Transverse colon (tissue), 4 donors: ENCODE measurements at regions of chr4 and their contacts with region 1.

Region 1: DNA sequence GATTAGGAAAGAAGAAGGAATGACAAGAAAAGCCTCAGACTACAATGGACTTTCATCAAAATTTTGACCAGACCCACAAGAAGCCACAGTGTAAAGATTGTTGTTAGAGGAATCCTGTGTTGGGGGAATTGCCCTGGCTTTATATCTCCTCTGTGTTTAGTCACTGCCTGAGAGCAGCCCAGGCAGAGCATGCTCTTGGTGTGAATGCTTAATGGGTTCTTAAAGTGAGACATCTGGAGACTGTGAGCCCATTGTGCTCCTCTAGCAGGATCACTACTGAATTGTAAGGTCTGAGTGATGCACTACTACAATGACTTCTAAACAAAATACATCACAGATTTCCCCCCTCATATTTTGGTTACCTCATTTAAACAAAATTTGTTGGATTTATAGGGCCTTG is 1860.5 kb upstream of the ADGRL3 start:
- DNase-seq: no peak
- H3K4me3 ChIP-seq: no peak overlapping the region
- H3K27ac ChIP-seq: no peak overlapping the region
- H3K4me1 ChIP-seq: no peaks in the 10 kb centered on the region
- H3K27me3 ChIP-seq: no peaks in the 10 kb centered on the region
- CTCF ChIP-seq: no peak
- EP300 ChIP-seq: no peak
- POLR2A ChIP-seq: no peak

Region 2: GRCh38 chr4:59455751-59456150 is 116.1 kb after region 1 on chr4:
- in situ Hi-C with region 1: no loop called
- intact Hi-C with region 1: loop called (anchors 10 kb)
- DNase-seq: no peak
- H3K4me3 ChIP-seq: no peak overlapping the region
- H3K27ac ChIP-seq: no peak overlapping the region
- H3K4me1 ChIP-seq: no peaks in the 10 kb centered on the region
- H3K27me3 ChIP-seq: no peaks in the 10 kb centered on the region
- CTCF ChIP-seq: no peak
- EP300 ChIP-seq: no peak
- POLR2A ChIP-seq: no peak